Naive thymus-derived CD4-positive, alpha-beta T cell (primary cell): ENCODE measurements at regions of chr10 and their contacts with region 1.

Region 1: DNA sequence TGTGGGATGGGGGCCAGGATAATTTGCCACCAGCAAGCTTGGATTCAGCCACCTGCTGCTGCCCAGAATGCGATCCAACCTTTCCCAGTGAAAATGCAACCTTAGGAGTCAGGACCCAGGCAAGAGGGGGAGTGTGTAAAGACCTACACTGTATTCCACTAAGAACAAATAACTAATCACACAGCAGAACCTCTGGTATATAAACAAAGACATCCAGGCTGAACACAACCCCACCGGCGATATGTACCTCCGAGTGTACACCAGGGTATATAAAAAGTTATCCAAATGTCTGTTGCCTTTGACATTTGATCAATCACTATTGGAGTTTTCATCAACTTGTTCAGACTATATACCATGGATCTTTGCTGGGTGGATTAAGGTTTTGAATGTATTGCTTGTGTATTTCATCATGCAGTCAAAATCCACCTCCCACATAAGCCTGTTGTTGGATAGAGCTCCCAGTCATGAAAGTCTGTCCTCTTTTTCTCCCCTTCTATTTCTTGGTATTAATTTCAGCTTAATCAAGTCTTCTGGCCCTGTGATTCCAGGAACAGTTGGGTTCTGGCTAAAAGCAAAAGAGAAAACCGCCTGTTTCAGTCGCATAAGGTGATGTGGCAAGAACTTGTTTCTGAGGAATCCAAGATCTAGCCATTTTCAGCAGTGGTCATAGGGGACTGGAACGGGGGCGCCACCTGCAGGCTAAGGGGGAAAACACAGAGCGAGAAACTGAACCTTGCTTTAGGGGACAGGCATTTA is 290.7 kb downstream of the CCDC3 start:
- DNase-seq: peak; percentile 50 to 83 (median 71)
- ATAC-seq: peak; percentile 89
- H3K4me3 ChIP-seq: no peak overlapping the region
- H3K4me3 Mint-ChIP-seq: peak overlapping the region in 1 of 10 donors; percentile 42
- H3K27ac ChIP-seq: no peak overlapping the region
- H3K27ac Mint-ChIP-seq: peak overlapping the region in 4 of 9 donors; percentile 4 to 79 (median 46)
- H3K4me1 ChIP-seq: no peaks in the 10 kb centered on the region
- H3K4me1 Mint-ChIP-seq: peaks cover 5 to 53% (median 8%) of the 10 kb centered on the region in 7 donors
- H3K27me3 ChIP-seq: no peaks in the 10 kb centered on the region
- H3K27me3 Mint-ChIP-seq: no peaks in the 10 kb centered on the region

Region 2: GRCh38 chr10:11782793-11783557 is 927.8 kb before region 1 on chr10:
- CTCF ChIA-PET with region 1: no interaction called
- POLR2A ChIA-PET with region 1: no interaction called
- intact Hi-C with region 1: loop called in 1 of 2 experiments (anchors 5 kb)
- DNase-seq: peak in 5 of 9 donors; percentile 36 to 63 (median 42)
- ATAC-seq: peak; percentile 63
- H3K4me3 ChIP-seq: no peak overlapping the region
- H3K4me3 Mint-ChIP-seq: no peak overlapping the region
- H3K27ac ChIP-seq: no peak overlapping the region
- H3K27ac Mint-ChIP-seq: no peak overlapping the region
- H3K4me1 ChIP-seq: no peaks in the 10 kb centered on the region
- H3K4me1 Mint-ChIP-seq: peaks cover 0 to 9% (median 0%) of the 10 kb centered on the region in 7 donors
- H3K27me3 ChIP-seq: no peaks in the 10 kb centered on the region
- H3K27me3 Mint-ChIP-seq: peaks cover 0 to 22% (median 4%) of the 10 kb centered on the region in 5 donors

Region 3: DNA sequence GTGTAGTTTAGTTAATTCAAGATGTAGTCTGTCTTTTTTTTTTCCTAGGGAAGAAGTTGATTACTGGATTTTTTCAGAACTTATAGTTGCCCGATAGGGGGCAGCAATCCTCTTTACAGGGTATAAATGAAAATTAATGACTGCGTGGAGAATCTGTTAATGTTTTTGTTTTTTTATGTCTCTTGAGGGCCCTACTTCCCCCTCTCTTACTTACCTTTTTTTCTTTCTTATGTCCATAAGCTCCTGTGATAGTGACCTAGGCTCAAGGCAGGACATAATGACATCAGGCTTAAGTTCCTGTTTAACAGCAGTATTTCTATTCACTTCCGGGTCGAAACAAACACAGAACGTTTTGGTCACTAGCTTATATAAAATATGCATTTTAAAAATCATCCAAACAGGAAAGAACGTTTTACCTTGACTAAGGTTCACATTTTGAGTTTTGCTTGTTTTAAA is 496.0 kb before region 1 on chr10:
- CTCF ChIA-PET with region 1: interaction called, 3 read pairs
- POLR2A ChIA-PET with region 1: no interaction called
- intact Hi-C with region 1: loop called (anchors 1 kb)
- DNase-seq: peak in 7 of 9 donors; percentile 27 to 62 (median 47)
- ATAC-seq: peak; percentile 69
- H3K4me3 ChIP-seq: no peak overlapping the region
- H3K4me3 Mint-ChIP-seq: peak overlapping the region; percentile 61 to 84 (median 72)
- H3K27ac ChIP-seq: peak overlapping the region; percentile 38
- H3K27ac Mint-ChIP-seq: peak overlapping the region; percentile 73 to 96 (median 87)
- H3K4me1 ChIP-seq: no peaks in the 10 kb centered on the region
- H3K4me1 Mint-ChIP-seq: peaks cover 5 to 37% (median 20%) of the 10 kb centered on the region in 7 donors
- H3K27me3 ChIP-seq: no peaks in the 10 kb centered on the region
- H3K27me3 Mint-ChIP-seq: no peaks in the 10 kb centered on the region

Region 4: DNA sequence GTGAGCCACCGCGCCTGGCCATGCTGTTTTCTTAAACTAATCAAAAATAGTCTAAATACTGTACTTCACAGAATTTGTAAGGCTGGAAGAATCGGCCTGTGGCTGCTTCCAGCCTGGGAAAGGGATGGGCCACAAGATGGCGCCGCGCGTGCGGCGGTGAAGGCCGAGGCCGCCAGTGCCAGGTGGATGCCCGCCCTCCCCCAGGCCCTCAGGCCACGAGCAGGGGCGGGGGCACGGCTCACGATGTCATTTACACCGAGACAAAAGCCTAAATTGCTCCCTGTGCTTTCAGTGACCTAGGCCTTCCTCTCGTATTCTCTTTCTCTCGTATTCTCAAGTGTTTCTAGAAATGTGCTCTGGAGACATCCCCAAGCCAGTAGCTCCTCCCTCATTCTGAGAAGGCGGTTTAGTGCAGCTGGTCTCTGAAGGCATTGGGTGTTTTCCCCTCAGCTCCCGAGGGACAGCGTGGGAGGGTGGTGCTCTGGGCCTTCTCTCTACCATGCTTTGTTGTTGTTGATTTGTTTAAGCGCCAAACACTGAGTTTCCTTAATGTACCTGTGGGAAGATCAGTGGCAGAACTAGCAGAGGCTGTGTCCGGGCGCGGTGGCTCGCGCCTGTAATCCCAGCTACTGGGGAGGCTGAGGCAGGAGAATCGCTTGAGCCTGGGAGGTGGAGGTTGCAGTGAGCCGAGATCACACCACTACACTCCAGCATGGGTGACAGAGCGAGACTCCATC is 446.4 kb before region 1 on chr10:
- CTCF ChIA-PET with region 1: interaction called, 61 read pairs
- POLR2A ChIA-PET with region 1: interaction called, 3 read pairs
- intact Hi-C with region 1: loop called (anchors 1 kb)
- DNase-seq: peak; percentile 45 to 75 (median 67)
- ATAC-seq: peak; percentile 73
- H3K4me3 ChIP-seq: peak overlapping the region; percentile 45
- H3K4me3 Mint-ChIP-seq: peak overlapping the region; percentile 58 to 81 (median 72)
- H3K27ac ChIP-seq: no peak overlapping the region
- H3K27ac Mint-ChIP-seq: peak overlapping the region in 7 of 9 donors; percentile 10 to 87 (median 51)
- H3K4me1 ChIP-seq: no peaks in the 10 kb centered on the region
- H3K4me1 Mint-ChIP-seq: peaks cover 0 to 26% (median 5%) of the 10 kb centered on the region in 7 donors
- H3K27me3 ChIP-seq: no peaks in the 10 kb centered on the region
- H3K27me3 Mint-ChIP-seq: no peaks in the 10 kb centered on the region

Region 5: GRCh38 chr10:12484941-12485805 is 225.6 kb before region 1 on chr10:
- CTCF ChIA-PET with region 1: no interaction called
- POLR2A ChIA-PET with region 1: no interaction called
- intact Hi-C with region 1: loop called in 1 of 2 experiments (anchors 1 kb)
- DNase-seq: peak in 7 of 9 donors; percentile 13 to 38 (median 27)
- ATAC-seq: peak; percentile 70
- H3K4me3 ChIP-seq: no peak overlapping the region
- H3K4me3 Mint-ChIP-seq: peak overlapping the region; percentile 45 to 77 (median 71)
- H3K27ac ChIP-seq: no peak overlapping the region
- H3K27ac Mint-ChIP-seq: peak overlapping the region; percentile 61 to 90 (median 84)
- H3K4me1 ChIP-seq: peaks cover 0 to 24% of the 10 kb centered on the region in 2 donors
- H3K4me1 Mint-ChIP-seq: peaks cover 15 to 70% (median 47%) of the 10 kb centered on the region in 7 donors
- H3K27me3 ChIP-seq: no peaks in the 10 kb centered on the region
- H3K27me3 Mint-ChIP-seq: no peaks in the 10 kb centered on the region

Region 6: GRCh38 chr10:12726971-12727831 is 16.4 kb after region 1 on chr10:
- CTCF ChIA-PET with region 1: interaction called, 4 read pairs
- POLR2A ChIA-PET with region 1: no interaction called
- intact Hi-C with region 1: loop called in 1 of 2 experiments (anchors 1 kb)
- DNase-seq: peak in 1 of 9 donors; percentile 26
- ATAC-seq: peak; percentile 34
- H3K4me3 ChIP-seq: no peak overlapping the region
- H3K4me3 Mint-ChIP-seq: no peak overlapping the region
- H3K27ac ChIP-seq: no peak overlapping the region
- H3K27ac Mint-ChIP-seq: peak overlapping the region in 2 of 9 donors; percentile 15 to 19
- H3K4me1 ChIP-seq: peaks cover 0 to 6% of the 10 kb centered on the region in 2 donors
- H3K4me1 Mint-ChIP-seq: peaks cover 5 to 36% (median 19%) of the 10 kb centered on the region in 7 donors
- H3K27me3 ChIP-seq: no peaks in the 10 kb centered on the region
- H3K27me3 Mint-ChIP-seq: no peaks in the 10 kb centered on the region